OCI-LY7 (cell line): ENCODE measurements at regions of chr3 and their contacts with region 1.

Region 1: DNA sequence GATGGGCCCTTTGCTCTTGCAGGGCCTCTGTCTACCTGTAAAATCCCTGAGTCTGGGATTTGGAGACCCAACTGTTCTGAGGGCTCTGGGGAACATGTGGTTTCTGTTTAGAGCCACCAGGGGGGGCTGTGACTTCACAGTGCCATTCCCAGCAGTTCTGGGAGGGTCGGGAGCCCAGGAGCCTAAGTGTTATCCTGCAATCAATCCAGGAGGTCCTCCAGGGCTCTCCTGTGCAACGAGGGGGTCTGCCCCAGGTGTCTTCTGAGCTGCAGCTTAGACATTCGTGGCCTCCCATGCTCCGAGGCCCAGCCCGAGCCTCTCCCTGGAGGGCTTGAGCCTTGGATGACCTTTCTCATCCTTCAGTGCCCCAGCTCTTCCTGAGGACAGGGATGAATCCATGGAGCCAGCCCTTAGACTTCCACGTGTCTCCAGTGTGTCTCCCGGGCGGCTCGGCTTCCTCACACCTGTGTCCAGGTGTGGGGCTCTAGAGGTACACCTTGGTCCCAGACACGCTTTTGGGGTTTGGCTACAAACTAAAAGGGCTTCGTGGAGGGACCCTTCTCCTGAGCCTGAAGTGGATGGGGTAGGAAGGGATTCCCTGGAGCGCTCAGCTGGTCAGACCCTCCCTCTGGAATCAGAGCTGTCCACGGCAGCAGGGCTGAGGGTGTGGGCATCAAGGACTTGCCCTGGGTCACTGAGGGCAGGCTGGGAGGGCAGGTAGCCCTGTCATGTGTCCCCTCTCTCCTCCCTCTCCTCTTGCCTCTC is 20.3 kb upstream of the ABTB1 start:
- DNase-seq: peak; percentile 49
- H3K4me3 ChIP-seq: no peak overlapping the region
- H3K27ac ChIP-seq: no peak overlapping the region
- H3K4me1 ChIP-seq: no peaks in the 10 kb centered on the region
- CTCF ChIP-seq: peak; percentile 83

Region 2: GRCh38 chr3:127831723-127832172 is 179.3 kb after region 1 on chr3:
- CTCF ChIA-PET with region 1: no interaction called
- POLR2A ChIA-PET with region 1: interaction called, 3 read pairs
- intact Hi-C with region 1: loop called (anchors 1 kb)
- DNase-seq: peak; percentile 65
- H3K4me3 ChIP-seq: no peak overlapping the region
- H3K27ac ChIP-seq: no peak overlapping the region
- H3K4me1 ChIP-seq: no peaks in the 10 kb centered on the region
- CTCF ChIP-seq: peak; percentile 92

Region 3: GRCh38 chr3:127889976-127890650 is 237.7 kb after region 1 on chr3:
- CTCF ChIA-PET with region 1: no interaction called
- POLR2A ChIA-PET with region 1: no interaction called
- intact Hi-C with region 1: loop called (anchors 2 kb)
- DNase-seq: no peak
- H3K4me3 ChIP-seq: no peak overlapping the region
- H3K27ac ChIP-seq: no peak overlapping the region
- H3K4me1 ChIP-seq: no peaks in the 10 kb centered on the region
- CTCF ChIP-seq: no peak

Region 4: GRCh38 chr3:127970966-127971592 is 318.7 kb after region 1 on chr3:
- CTCF ChIA-PET with region 1: no interaction called
- POLR2A ChIA-PET with region 1: no interaction called
- intact Hi-C with region 1: loop called (anchors 1 kb)
- DNase-seq: peak; percentile 54
- H3K4me3 ChIP-seq: no peak overlapping the region
- H3K27ac ChIP-seq: no peak overlapping the region
- H3K4me1 ChIP-seq: no peaks in the 10 kb centered on the region
- CTCF ChIP-seq: peak; percentile 81